GM18951 (cell line): ENCODE measurements at regions of chr9 and their contacts with region 1.

Region 1: DNA sequence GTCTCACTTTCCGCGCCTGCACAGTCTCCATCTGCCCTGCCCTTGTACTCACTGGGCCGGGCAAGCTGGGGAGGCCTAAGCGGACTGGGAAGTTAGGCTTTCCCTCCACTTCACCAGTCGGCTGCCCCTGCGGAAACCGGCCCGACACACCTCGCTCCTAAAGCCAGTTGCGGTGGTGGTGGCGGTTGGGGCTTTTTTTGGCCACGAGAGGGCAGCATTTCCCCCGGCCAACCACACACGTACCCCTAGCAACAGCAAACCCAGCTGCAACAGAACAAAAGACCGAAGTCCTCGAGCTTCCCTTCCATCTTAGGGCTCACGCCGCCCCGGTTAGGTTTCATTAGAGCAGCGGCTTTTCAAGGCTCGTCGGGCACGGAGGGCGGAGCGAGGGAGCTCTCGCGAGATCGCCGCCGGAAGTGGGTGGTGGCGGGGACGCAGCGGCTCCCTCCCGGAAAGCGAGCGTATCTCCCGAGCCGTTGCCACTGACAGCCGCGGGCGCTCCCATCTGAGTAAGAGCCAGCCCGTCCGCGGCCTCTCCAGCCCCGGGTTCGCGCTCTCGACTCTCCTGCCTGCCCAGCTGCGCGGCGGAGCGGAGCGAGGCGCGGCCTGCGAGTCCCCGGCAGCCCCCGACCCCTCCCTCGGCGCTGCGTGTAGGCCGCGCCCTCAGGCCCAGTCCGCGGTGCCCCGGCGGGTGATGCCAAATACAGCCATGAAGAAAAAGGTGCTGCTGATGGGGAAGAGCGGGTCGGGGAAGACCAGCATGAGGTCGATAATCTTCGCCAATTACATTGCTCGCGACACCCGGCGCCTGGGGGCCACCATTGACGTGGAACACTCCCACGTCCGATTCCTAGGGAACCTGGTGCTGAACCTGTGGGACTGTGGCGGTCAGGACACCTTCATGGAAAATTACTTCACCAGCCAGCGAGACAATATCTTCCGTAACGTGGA is at the start of gene RRAGA:
- POLR2A ChIP-seq: peak; percentile 95

Region 2: DNA sequence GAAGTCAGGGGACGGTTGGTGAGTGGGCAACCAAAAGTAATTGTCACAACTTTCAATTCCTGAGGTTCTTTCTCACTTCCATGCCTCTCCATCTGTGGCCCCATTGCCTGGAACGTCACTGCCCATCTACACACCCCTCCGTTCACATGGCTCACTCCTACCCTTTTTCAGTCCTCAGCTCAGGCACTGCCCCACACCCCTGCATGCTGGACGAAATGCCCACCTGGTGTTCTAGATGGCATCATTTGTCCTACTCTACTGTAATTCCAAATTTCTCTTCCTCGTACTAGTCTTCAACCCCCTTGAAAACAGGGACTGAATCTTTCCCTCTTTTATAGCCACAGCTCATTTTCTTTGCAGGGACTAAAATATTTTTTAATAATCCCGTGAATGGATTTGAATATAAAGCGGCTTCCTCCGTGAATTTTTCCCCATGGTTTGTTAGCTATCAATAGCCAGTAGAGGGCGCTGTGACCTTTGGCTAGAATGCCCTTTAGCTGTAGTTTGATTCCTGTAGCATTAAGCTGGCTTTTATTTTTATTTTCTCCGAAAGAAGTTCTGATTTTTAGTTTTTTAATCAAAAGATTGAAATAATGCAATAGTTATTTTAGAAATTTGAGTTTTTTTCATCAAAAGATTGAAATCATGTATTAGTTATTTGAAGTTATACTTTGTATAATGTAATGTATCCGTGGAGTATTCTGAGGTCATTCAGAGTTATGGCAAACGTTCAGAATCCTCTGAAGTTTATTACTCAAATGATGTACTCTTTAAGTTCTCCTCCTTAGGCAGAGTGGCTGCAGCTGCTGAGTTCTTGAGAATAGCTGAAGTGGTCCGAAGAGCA is 1238.3 kb before region 1 on chr9:
- in situ Hi-C with region 1: loop called (anchors 25 kb)
- POLR2A ChIP-seq: no peak

Region 3: DNA sequence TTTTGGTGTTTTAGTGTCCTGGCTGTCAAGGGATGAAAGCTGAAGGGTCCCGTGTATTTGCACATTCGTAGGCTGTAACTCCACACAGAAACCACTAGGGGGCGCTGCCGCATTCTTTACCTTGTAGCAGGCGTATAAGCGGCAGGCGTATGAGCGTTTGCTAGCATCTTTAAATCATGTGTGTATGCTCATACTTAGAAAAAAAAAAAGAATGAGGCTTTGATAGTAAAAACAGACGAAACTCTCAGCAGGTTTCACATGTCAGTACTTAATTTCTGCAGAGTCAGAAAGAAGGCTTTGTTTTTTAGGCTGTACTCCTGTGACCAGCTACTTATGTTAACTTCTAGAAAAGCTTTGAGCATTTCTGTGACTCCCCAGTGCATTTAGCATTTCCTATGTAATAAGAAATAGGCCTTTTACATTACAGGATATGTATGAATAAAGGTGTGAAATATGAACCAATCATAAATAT is 794.0 kb before region 1 on chr9:
- in situ Hi-C with region 1: loop called (anchors 25 kb)
- POLR2A ChIP-seq: no peak